Psoas muscle (tissue), 8 donors: ENCODE measurements at regions of chr10 and their contacts with region 1.

Region 1: DNA sequence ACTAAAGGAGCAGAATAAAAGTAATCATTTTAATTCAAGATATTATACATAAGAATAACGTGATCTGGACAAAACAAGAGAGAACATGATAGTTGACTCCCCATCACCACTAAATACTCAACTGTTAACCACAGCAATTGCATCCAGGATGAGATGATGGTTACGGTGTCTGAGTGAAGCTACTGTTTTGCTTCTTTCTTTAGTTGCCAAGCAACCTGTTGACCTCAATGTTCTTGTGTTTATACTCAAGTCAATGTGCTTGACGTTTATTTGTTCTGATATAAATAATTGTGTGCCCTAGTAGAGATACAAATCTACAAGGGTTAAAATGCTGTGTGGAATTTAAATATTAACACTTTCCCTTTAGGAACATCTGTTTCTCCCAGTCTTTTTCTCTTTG is 31.4 kb upstream of the MPP7 start:
- DNase-seq: no peak
- ATAC-seq: peak; percentile 40 to 80 (median 68)
- H3K4me3 ChIP-seq: no peak overlapping the region
- H3K27ac ChIP-seq: peak overlapping the region; percentile 1
- H3K4me1 ChIP-seq: no peaks in the 10 kb centered on the region
- H3K27me3 ChIP-seq: no peaks in the 10 kb centered on the region
- CTCF ChIP-seq: no peak

Region 2: DNA sequence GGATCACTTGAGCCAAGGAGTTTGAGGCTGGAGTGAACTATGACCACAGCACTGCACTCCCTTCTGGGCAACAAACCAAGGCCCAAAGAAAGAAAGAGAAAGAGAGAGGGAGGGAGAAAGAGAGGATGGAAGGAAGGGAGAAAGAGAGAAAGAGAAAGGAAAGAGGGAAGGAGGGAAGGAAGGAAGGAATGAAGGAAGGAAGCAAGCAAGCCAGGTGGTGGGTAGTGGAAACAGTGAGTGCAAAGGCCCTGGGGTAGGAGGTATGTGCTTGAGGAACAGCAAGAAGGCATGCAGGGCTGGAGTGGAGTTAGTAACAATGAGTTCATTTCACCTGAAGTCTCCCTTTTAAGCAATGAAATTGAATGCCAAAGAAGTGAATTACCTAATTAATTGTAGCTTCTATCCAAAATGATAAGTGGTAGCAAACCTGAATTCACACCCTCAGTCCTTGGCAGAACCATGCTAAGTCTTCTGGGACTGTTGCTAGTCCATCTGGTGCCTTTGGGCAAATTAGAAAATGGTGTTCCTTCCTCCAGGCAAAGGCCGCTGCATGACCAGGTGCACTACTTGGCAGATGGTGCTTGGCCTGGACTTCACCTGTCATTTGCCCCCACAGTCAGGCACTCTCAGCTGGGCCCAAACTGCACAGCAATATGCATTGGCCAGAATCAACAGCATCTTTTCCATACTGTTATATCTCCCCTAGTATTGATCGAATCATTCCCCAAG is 36.0 kb after region 1 on chr10:
- intact Hi-C with region 1: loop called in 1 of 2 experiments (anchors 5 kb)
- DNase-seq: no peak
- ATAC-seq: no peak
- H3K4me3 ChIP-seq: no peak overlapping the region
- H3K27ac ChIP-seq: no peak overlapping the region
- H3K4me1 ChIP-seq: no peaks in the 10 kb centered on the region
- H3K27me3 ChIP-seq: no peaks in the 10 kb centered on the region
- CTCF ChIP-seq: no peak